Activated CD8-positive, alpha-beta T cell treated with anti-CD3 and anti-CD28 coated beads for 36 hours (primary cell): ENCODE measurements at regions of chr18 and their contacts with region 1.

Region 1: DNA sequence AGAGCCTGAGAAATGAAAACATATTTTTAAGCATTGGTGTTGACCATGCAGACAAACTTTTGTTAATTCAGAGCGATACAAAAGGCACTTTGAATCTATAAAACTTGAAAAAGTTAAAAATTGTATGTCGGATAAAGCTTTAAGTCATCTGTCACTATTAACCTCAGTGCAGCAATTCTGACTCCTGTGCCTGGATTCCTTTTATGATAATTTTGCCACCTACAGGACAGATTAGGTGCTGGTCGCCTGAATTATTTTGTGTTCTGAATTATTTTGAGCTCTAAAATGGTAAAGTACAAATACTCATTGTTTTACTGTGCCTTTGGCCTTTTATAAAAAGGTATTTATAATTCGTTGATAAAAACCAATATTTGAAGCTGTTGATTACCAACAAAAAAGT is 19.4 kb upstream of the RNF138 start:
- DNase-seq: peak; percentile 22
- ATAC-seq: peak; percentile 73
- H3K4me3 Mint-ChIP-seq: no peak overlapping the region
- H3K27ac Mint-ChIP-seq: no peak overlapping the region
- H3K4me1 Mint-ChIP-seq: peaks cover 21% of the 10 kb centered on the region
- H3K27me3 Mint-ChIP-seq: no peaks in the 10 kb centered on the region
- CTCF ChIP-seq: peak; percentile 66

Region 2: GRCh38 chr18:31876707-31877106 is 195.6 kb before region 1 on chr18:
- CTCF ChIA-PET with region 1: no interaction called
- POLR2A ChIA-PET with region 1: no interaction called
- intact Hi-C with region 1: no loop called
- DNase-seq: no peak
- ATAC-seq: no peak
- H3K4me3 Mint-ChIP-seq: no peak overlapping the region
- H3K27ac Mint-ChIP-seq: no peak overlapping the region
- H3K4me1 Mint-ChIP-seq: peaks cover 14% of the 10 kb centered on the region
- H3K27me3 Mint-ChIP-seq: no peaks in the 10 kb centered on the region
- CTCF ChIP-seq: no peak

Region 3: DNA sequence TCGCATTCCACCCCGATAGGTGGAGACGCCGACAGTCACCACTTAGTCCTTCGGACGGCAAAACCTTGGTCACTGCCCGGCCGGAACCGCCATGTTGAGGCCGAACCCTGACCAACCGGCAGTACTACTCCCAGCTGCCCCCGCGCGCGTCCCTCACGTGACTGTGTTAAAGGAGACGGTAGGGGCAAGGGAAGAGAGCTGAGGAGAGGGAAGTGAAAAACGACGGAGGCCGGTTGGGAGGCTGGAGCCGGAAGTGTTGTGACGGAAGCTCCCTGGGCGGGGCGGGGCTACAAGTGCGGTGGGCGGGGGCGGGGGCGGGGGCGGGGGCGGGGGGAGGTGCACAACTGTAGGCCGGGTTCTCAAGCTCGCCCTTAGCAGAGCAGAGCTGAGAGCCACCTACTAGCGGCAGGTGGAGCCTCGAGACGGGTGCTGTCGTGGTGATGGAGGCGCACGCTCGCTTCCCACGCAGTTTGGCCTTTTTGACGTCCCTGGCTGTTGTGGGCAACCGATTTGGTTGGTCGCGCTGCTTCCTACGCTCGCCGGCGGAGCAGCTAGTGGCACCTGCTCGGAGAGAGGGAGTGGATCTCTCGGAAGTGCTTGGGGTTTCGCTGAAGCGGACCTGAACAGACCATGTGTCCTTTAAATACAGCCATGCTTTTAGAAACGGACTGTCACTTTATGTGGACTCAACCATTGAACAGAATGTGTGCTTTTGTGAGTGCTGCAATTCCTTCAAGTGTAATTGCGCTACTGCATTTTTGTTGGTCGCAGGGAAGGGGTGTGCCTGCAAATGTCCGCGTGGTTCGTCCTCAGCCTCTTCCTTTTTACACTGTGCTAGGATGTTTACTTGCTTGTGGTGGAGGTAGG is 129.1 kb before region 1 on chr18 and contains the start of gene TRAPPC8:
- CTCF ChIA-PET with region 1: interaction called, 10 read pairs
- POLR2A ChIA-PET with region 1: no interaction called
- intact Hi-C with region 1: no loop called
- DNase-seq: peak; percentile 96
- ATAC-seq: peak; percentile 83
- H3K4me3 Mint-ChIP-seq: peak within 1 kb of the TSS; percentile 100
- H3K27ac Mint-ChIP-seq: peak within 1 kb of the TSS; percentile 99
- H3K4me1 Mint-ChIP-seq: peaks cover 33% of the 10 kb centered on the region
- H3K27me3 Mint-ChIP-seq: no peaks in the 10 kb centered on the region
- CTCF ChIP-seq: no peak
- total RNA-seq, gene TRAPPC8: 26.1 to 29.6 TPM

Region 4: DNA sequence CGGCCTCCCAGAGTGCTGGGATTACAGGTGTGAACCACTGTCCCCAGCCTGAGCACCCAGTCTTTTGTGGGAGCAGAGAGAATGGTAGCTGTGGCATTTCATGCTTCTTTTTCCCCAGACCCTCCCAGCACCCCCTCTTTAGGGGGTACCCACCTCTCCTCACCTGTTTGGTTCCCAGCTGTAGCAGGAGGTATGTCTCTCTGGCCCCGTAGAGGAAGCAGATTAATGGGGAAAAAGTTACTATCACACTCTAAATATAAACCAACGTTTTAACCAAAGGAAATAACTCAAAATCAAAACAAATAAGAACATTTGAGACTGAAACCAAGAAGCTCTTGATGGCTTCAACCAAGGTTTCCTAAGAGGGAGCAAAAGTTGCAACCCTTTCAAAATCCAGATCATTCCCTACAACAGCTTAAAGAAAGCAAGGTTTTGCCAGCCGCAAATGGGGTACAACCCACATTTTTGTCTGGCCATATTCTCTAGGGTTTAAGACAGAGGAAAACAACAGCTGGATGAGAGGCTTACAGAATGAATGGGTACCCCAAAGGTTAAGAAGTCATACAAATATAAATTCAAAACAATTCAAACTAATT is 45.7 kb before region 1 on chr18:
- CTCF ChIA-PET with region 1: interaction called, 13 read pairs
- POLR2A ChIA-PET with region 1: no interaction called
- intact Hi-C with region 1: no loop called
- DNase-seq: no peak
- ATAC-seq: peak; percentile 37
- H3K4me3 Mint-ChIP-seq: peak overlapping the region; percentile 68
- H3K27ac Mint-ChIP-seq: peak overlapping the region; percentile 58
- H3K4me1 Mint-ChIP-seq: peaks cover 71% of the 10 kb centered on the region
- H3K27me3 Mint-ChIP-seq: no peaks in the 10 kb centered on the region
- CTCF ChIP-seq: no peak

Region 5: DNA sequence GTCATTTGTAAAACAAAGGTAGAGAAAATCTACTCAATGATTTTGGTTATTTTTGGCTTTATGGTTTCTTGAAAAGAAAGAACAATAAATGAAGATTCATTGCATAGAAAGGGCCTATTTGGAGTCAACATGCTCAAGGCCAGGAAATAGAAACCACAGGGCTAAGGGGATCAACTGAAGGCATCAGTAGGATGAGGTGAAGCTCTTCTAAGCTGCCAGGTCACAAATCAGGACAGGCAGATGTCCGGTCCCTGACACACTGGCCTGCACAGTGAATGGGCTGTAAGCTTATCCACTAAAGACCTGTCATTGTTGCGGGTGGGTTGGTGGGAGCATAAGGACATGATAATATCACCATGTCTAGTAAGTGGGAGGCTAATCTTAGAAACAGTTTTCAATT is 12.3 kb before region 1 on chr18:
- CTCF ChIA-PET with region 1: interaction called, 20 read pairs
- POLR2A ChIA-PET with region 1: interaction called, 3 read pairs
- intact Hi-C with region 1: no loop called
- DNase-seq: no peak
- ATAC-seq: no peak
- H3K4me3 Mint-ChIP-seq: no peak overlapping the region
- H3K27ac Mint-ChIP-seq: peak overlapping the region; percentile 64
- H3K4me1 Mint-ChIP-seq: peaks cover 44% of the 10 kb centered on the region
- H3K27me3 Mint-ChIP-seq: no peaks in the 10 kb centered on the region
- CTCF ChIP-seq: no peak

Region 6: GRCh38 chr18:32086861-32087260 is 14.5 kb after region 1 on chr18:
- CTCF ChIA-PET with region 1: interaction called, 29 read pairs
- POLR2A ChIA-PET with region 1: interaction called, 3 read pairs
- intact Hi-C with region 1: no loop called
- DNase-seq: no peak
- ATAC-seq: no peak
- H3K4me3 Mint-ChIP-seq: no peak overlapping the region
- H3K27ac Mint-ChIP-seq: no peak overlapping the region
- H3K4me1 Mint-ChIP-seq: peaks cover 31% of the 10 kb centered on the region
- H3K27me3 Mint-ChIP-seq: peaks cover 1% of the 10 kb centered on the region
- CTCF ChIP-seq: no peak

Region 7: GRCh38 chr18:32092422-32093101 is 20.2 kb after region 1 on chr18:
- CTCF ChIA-PET with region 1: interaction called, 29 read pairs
- POLR2A ChIA-PET with region 1: no interaction called
- intact Hi-C with region 1: no loop called
- DNase-seq: peak; percentile 100
- ATAC-seq: peak; percentile 92
- H3K4me3 Mint-ChIP-seq: peak overlapping the region; percentile 97
- H3K27ac Mint-ChIP-seq: peak overlapping the region; percentile 97
- H3K4me1 Mint-ChIP-seq: peaks cover 41% of the 10 kb centered on the region
- H3K27me3 Mint-ChIP-seq: no peaks in the 10 kb centered on the region
- CTCF ChIP-seq: no peak